RWPE1 (cell line): ENCODE measurements at regions of chr17 and their contacts with region 1.

Region 1: GRCh38 chr17:74493381-74493833 is 27.0 kb downstream of the CD300A start:
- DNase-seq: peak; percentile 73
- H3K27ac ChIP-seq: no peak overlapping the region
- CTCF ChIP-seq: peak; percentile 93

Region 2: DNA sequence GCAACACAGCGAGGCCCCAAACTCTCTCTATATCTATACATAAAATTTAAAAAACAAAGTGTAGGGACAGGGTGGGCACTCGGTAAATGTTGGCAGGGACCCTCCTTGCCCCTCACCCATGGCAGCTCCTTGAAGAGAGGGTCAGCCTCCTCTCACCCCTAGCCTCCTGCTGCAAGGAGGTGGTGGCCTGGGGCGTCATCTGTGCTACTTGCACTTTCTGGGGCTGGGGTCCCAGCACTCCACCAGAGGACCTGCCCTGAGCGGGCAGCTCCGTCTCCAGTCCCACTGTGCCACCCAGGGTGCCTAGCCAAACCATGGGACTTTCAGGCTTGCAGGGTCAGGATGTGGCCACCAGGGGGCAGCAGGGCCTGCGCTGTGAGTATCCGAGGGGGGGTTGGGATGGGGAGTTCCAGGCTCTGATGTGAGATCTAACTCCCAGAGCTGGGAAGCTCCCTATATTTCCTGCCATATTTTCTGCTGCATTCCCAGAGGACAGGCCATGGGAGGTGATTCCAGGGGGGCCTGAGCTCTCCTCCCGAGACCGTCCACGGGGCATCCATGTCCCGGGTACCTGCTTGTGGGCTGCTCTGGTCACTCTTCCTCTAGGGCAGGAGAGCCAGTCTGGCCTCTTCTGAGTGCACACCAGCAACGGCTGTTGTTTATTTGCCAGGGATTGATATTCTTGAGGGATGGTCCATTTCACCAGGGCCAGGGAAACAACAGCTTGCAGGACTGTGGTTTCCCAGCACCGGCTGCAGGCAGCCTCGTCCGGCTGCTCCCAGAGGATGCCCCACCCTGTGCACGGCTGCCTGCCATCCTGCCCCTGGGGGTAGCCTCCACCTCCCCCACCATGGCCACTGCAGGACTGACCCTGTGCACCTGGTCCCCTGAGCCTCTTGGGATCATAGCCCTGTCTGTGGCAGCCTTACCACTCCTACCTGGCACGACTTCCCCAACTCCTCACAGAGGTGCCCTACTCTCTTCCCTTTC is 125.0 kb before region 1 on chr17:
- CTCF ChIA-PET with region 1: interaction called, 12 read pairs
- POLR2A ChIA-PET with region 1: no interaction called
- DNase-seq: peak; percentile 76
- H3K27ac ChIP-seq: no peak overlapping the region
- CTCF ChIP-seq: peak; percentile 96